Head of caudate nucleus (tissue), 42 donors: ENCODE measurements at regions of chr11 and their contacts with region 1.

Region 1: GRCh38 chr11:44095506-44096394 is at the start of gene EXT2:
- DNase-seq: peak; percentile 66 to 96 (median 90)

Region 2: GRCh38 chr11:43664295-43664694 is 431.5 kb before region 1 on chr11:
- intact Hi-C with region 1: no loop called
- DNase-seq: no peak

Region 3: DNA sequence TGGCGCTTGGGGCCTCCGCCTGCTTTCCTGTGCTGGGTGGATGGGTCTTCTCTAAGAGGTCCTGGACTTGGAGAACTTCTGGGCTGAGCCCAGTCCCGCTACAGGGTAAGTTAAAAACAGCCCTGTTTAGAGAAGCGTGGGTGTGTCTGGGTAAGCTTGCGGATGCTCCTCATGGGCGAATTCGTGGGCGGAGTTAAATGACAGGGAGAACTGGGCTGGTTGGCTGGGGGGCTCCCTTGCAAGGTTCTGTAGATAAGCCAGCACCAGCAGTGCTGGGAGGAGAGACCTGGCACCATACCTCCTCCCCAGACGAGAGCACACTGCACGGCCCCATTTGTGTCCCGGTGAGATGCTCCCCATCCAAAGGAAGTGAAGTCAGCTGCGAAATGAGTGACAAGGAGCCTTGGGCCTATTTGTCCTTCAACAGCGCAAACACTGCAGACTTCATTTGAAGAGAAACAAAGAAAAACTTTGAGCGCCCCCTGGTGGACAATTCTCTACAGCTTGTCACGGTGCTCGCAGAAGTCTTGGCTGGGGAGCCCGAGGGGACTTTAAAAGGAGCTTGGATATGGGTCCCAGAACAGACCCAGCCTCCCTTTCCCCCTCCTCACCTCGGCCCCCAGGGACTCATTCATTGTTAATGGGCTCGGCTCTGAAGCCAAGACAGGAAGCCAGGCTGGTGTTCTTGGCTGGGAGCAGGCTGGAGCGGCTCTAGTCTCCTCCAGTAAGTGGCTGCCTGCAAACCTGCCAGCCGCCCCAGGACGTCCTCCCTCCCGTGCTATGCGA is 815.5 kb after region 1 on chr11:
- intact Hi-C with region 1: loop called (anchors 10 kb)
- DNase-seq: peak; percentile 57 to 99 (median 92)